PC-3 (cell line): ENCODE measurements at regions of chr2 and their contacts with region 1.

Region 1: DNA sequence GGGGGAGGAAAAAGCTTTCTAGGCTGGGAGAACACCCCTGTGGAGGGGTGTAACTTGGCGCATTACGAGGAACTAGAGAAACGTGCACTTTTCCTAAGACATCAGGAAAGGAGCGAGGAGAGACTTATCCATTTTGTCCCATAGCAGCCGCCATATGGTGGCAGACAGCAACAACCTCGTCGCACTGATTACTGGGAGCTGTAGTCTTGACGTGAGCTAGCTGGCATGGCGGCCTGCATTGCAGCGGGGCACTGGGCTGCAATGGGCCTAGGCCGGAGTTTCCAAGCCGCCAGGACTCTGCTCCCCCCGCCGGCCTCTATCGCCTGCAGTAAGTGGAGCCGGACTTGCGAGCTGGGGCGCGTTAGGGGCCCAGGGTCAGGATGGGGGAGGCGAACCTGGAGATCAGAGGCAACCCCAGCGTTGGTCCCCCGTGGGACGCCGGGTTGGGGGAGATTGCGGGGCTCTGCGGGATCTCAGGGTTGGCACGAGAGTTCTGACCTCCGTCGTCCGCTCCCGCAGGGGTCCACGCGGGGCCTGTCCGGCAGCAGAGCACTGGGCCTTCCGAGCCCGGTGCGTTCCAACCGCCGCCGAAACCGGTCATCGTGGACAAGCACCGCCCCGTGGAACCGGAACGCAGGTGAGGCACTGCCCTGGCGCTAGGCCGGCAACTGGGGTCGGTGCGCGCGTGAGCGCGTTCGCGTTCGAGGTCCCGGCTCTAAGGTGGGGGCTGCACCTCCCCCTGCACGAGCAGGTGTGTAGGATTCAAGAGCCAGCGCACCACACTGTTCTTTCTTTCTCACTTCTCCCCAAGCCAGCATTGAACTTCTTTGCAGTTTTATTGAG is at the start of gene MRPL19:
- DNase-seq: peak; percentile 91
- ATAC-seq: peak; percentile 98
- H3K4me3 ChIP-seq: peak within 1 kb of the TSS; percentile 94
- H3K27ac ChIP-seq: peak within 1 kb of the TSS; percentile 35
- H3K4me1 ChIP-seq: peaks cover 6% of the 10 kb centered on the region
- H3K27me3 ChIP-seq: no peaks in the 10 kb centered on the region
- CTCF ChIP-seq: no peak
- total RNA-seq, gene MRPL19: 81.1 and 85.9 TPM in 2 replicates

Region 2: DNA sequence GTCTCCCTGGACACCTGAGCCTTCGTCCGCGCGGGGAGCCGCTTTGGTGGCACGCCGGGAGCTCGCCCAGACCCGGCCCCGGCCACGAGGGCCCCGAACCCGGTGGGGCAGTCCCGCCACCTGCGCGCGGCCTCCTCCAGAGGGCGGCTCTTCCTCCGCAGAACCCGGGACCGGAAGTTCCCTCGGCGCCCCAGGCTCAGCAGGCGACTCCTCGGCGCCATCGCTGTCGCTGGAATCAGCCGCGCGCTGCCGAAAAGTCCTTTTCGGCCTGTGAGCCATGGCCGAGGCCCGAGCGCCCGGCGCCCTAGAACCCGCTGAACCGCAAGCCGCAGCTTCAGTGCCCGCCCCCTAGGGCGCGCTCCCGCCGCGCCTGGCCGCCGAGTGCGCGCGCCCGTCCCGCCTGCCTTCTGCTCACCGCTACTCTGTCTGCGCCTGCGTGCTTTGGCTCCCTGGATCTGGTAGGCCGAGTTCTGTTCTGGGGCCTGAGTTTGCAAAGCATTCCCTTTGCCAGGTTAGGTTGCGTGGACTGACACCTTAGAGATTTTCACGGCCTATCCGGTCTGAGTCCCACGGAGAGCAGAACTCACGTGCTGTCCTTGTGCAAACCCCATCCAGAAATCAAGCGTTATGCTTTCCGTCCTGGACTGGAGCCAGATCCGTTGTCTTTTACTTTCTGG is 63.9 kb after region 1 on chr2 and contains the start of gene GCFC2:
- CTCF ChIA-PET with region 1: no interaction called
- POLR2A ChIA-PET with region 1: no interaction called
- intact Hi-C with region 1: loop called (anchors 1 kb)
- DNase-seq: peak; percentile 88
- ATAC-seq: peak; percentile 86
- H3K4me3 ChIP-seq: peak within 1 kb of the TSS; percentile 86
- H3K27ac ChIP-seq: peak within 1 kb of the TSS; percentile 67
- H3K4me1 ChIP-seq: peaks cover 25% of the 10 kb centered on the region
- H3K27me3 ChIP-seq: no peaks in the 10 kb centered on the region
- CTCF ChIP-seq: peak; percentile 35; the same call in 1 of the 2 replicates
- total RNA-seq, gene GCFC2: 24.5 and 31.1 TPM in 2 replicates